ENCODE measurements at regions of chr10 and their contacts with region 1.

Region 1: DNA sequence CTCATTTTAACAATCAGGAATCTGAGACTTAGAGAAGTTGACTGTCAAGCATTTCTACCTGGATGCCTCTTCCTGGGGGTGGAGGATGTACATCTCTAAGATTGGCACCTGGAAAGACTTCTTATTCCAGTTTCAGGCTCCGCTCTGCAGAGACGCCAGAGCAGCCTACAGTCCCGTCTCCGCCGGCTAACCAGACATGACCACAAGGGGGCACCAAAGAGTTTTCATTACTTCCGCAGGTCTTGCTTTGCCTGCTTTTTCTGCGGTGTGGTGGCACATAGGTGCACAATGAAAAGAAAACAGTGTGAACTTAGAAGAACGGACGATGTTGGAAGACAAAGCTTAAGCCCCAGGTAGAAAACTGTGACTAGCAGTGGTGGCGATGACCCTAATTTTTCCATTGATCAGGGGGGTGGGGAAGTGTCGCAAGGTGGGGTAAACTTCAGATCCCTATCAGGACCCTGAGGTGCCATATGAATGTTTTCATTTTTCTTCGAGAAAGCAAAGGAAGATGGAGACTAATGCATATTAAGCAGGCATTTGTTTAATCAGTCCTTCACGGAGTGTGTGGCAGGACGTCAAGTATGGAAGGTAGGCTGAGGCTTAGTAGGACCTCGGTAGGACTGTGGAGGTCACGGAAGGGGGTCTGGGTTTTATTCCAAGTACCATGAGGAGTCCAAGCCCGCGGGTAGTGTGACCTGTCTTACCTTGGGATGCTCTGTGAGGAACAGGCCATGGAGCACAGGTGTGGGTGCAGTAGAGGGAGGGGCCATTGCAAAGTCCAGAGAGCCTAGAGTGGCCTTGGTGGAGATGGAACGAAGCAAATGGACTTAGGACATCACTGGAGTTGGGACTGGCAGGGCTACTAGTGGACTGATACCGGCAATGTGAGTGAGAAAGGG is 60.1 kb upstream of the SORCS3 start:
- H3K4me3 ChIP-seq: no peak overlapping the region
- H3K27ac ChIP-seq: no peak overlapping the region
- H3K4me1 ChIP-seq: no peaks in the 10 kb centered on the region
- CTCF ChIP-seq: no peak

Region 2: GRCh38 chr10:104406715-104407650 is 174.0 kb before region 1 on chr10:
- CTCF ChIA-PET with region 1: interaction called, 11 read pairs
- POLR2A ChIA-PET with region 1: no interaction called
- H3K4me3 ChIP-seq: no peak overlapping the region
- H3K27ac ChIP-seq: no peak overlapping the region
- H3K4me1 ChIP-seq: no peaks in the 10 kb centered on the region
- CTCF ChIP-seq: peak; percentile 35; the same call in 1 of the 2 replicates

Region 3: GRCh38 chr10:104479906-104480593 is 101.0 kb before region 1 on chr10:
- CTCF ChIA-PET with region 1: no interaction called
- POLR2A ChIA-PET with region 1: no interaction called
- H3K4me3 ChIP-seq: no peak overlapping the region
- H3K27ac ChIP-seq: no peak overlapping the region; the same call in 1 of the 2 replicates
- H3K4me1 ChIP-seq: no peaks in the 10 kb centered on the region
- CTCF ChIP-seq: no peak

Region 4: GRCh38 chr10:104548090-104548489 is 32.9 kb before region 1 on chr10:
- CTCF ChIA-PET with region 1: no interaction called
- POLR2A ChIA-PET with region 1: no interaction called
- H3K4me3 ChIP-seq: no peak overlapping the region
- H3K27ac ChIP-seq: no peak overlapping the region
- H3K4me1 ChIP-seq: no peaks in the 10 kb centered on the region
- CTCF ChIP-seq: no peak

Region 5: DNA sequence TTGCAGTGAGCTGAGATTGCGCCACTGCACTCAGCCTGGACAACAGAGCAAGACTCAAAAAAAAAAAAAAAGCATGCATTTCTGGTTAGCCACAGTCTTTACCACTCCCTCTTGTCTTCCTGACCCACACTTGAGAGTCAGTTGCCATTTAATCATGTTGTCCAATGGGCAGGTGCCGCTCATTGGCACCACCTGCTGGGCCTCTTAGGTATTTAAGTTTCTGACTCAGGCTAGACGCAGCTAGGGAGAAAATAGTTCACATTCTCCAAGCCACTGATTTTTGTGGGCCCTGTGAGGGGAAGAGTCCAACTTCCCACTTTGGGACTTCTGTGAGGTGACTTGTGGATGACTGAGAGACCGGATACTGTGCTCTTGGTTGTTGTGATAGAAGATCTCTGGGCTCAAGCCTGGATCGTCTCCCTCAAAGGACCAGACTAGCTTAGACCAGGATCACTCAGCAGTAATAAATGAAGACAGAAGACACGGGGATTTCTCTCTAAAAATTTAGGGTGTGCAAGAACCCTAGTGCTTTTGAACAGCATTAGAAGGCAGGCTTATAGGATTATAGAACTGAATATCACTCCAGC is 33.3 kb after region 1 on chr10:
- CTCF ChIA-PET with region 1: interaction called, 12 read pairs
- POLR2A ChIA-PET with region 1: no interaction called
- H3K4me3 ChIP-seq: no peak overlapping the region
- H3K27ac ChIP-seq: no peak overlapping the region
- H3K4me1 ChIP-seq: no peaks in the 10 kb centered on the region
- CTCF ChIP-seq: no peak

Region 6: GRCh38 chr10:104622598-104623209 is 41.7 kb after region 1 on chr10:
- CTCF ChIA-PET with region 1: interaction called, 23 read pairs
- POLR2A ChIA-PET with region 1: no interaction called
- H3K4me3 ChIP-seq: no peak overlapping the region
- H3K27ac ChIP-seq: no peak overlapping the region
- H3K4me1 ChIP-seq: no peaks in the 10 kb centered on the region
- CTCF ChIP-seq: no peak